ENCODE measurements at regions of chr1 and their contacts with region 1.

Region 1: GRCh38 chr1:186680245-186681061 is at the start of gene PTGS2:
- DNase-seq: no peak
- H3K4me3 ChIP-seq: peak within 1 kb of the TSS; percentile 51 to 78 (median 63)
- H3K27ac ChIP-seq: peak within 1 kb of the TSS; percentile 78 to 92 (median 88)
- H3K4me1 ChIP-seq: peaks cover 0 to 16% (median 0%) of the 10 kb centered on the region in 3 donors
- H3K27me3 ChIP-seq: no peaks in the 10 kb centered on the region
- CTCF ChIP-seq: peak in 5 of 6 experiments; percentile 22 to 54 (median 39)
- POLR2A ChIP-seq: peak in 2 of 4 donors; percentile 78 to 82
- total RNA-seq, gene PTGS2: 1.1 to 4.1 (median 2.0) TPM

Region 2: DNA sequence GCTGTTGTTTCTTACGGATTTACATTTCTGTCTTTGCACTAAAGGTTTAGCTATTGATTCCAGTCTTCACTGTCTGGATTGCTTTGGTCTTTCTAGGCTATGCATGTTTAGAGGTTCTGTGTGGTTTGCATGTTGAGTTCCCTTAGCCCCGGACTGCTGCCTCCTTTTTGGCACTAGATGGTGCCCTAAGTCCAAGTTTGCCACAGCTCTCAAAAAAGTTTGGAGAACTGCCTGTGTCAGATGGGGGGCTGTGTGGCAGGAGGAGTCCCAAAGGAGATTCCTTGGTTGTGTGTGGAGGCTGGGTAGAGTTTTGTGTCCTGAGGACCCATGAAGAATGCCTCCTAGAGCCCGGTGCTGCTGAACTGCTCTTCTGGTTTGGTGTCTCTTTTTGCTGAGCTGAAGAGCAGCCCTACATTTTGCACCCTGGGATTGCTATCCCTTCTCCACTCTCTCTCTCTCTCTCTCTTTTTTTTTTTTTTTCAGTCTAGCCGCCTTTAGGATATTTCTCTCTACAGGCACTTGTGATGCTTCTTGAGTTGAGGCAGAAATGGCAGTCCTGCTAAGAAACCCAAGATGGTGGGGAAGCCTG is 74.6 kb before region 1 on chr1:
- intact Hi-C with region 1: loop called (anchors 5 kb)
- DNase-seq: no peak
- H3K4me3 ChIP-seq: no peak overlapping the region
- H3K27ac ChIP-seq: no peak overlapping the region
- H3K4me1 ChIP-seq: no peaks in the 10 kb centered on the region
- H3K27me3 ChIP-seq: no peaks in the 10 kb centered on the region
- CTCF ChIP-seq: peak in 5 of 6 experiments; percentile 23 to 71 (median 55)
- POLR2A ChIP-seq: no peak

Region 3: GRCh38 chr1:186985889-186986491 is 305.5 kb after region 1 on chr1:
- intact Hi-C with region 1: loop called (anchors 10 kb)
- DNase-seq: no peak
- H3K4me3 ChIP-seq: no peak overlapping the region
- H3K27ac ChIP-seq: no peak overlapping the region
- H3K4me1 ChIP-seq: peaks cover 0 to 9% (median 0%) of the 10 kb centered on the region in 3 donors
- H3K27me3 ChIP-seq: no peaks in the 10 kb centered on the region
- CTCF ChIP-seq: peak; percentile 54 to 82 (median 68)
- POLR2A ChIP-seq: no peak

Measured in esophagus squamous epithelium (tissue), 5 donors.